Calu3 (cell line): ENCODE measurements at regions of chr12 and their contacts with region 1.

Region 1: GRCh38 chr12:76455582-76456345 is 103.8 kb downstream of the OSBPL8 start:
- DNase-seq: peak; percentile 55
- H3K4me3 Mint-ChIP-seq: no peak overlapping the region
- H3K27ac Mint-ChIP-seq: peak overlapping the region; percentile 67
- H3K4me1 Mint-ChIP-seq: peaks cover 27% of the 10 kb centered on the region
- H3K27me3 Mint-ChIP-seq: no peaks in the 10 kb centered on the region
- CTCF ChIP-seq: peak; percentile 44

Region 2: GRCh38 chr12:75908961-75909605 is 546.7 kb before region 1 on chr12:
- CTCF ChIA-PET with region 1: no interaction called
- intact Hi-C with region 1: no loop called
- DNase-seq: no peak
- H3K4me3 Mint-ChIP-seq: no peak overlapping the region
- H3K27ac Mint-ChIP-seq: no peak overlapping the region
- H3K4me1 Mint-ChIP-seq: peaks cover 38% of the 10 kb centered on the region
- H3K27me3 Mint-ChIP-seq: no peaks in the 10 kb centered on the region
- CTCF ChIP-seq: no peak

Region 3: GRCh38 chr12:76037130-76038103 is 418.3 kb before region 1 on chr12:
- CTCF ChIA-PET with region 1: no interaction called
- intact Hi-C with region 1: loop called (anchors 5 kb)
- DNase-seq: peak; percentile 52
- H3K4me3 Mint-ChIP-seq: peak overlapping the region; percentile 0
- H3K27ac Mint-ChIP-seq: peak overlapping the region; percentile 31
- H3K4me1 Mint-ChIP-seq: peaks cover 57% of the 10 kb centered on the region
- H3K27me3 Mint-ChIP-seq: no peaks in the 10 kb centered on the region
- CTCF ChIP-seq: peak; percentile 71

Region 4: DNA sequence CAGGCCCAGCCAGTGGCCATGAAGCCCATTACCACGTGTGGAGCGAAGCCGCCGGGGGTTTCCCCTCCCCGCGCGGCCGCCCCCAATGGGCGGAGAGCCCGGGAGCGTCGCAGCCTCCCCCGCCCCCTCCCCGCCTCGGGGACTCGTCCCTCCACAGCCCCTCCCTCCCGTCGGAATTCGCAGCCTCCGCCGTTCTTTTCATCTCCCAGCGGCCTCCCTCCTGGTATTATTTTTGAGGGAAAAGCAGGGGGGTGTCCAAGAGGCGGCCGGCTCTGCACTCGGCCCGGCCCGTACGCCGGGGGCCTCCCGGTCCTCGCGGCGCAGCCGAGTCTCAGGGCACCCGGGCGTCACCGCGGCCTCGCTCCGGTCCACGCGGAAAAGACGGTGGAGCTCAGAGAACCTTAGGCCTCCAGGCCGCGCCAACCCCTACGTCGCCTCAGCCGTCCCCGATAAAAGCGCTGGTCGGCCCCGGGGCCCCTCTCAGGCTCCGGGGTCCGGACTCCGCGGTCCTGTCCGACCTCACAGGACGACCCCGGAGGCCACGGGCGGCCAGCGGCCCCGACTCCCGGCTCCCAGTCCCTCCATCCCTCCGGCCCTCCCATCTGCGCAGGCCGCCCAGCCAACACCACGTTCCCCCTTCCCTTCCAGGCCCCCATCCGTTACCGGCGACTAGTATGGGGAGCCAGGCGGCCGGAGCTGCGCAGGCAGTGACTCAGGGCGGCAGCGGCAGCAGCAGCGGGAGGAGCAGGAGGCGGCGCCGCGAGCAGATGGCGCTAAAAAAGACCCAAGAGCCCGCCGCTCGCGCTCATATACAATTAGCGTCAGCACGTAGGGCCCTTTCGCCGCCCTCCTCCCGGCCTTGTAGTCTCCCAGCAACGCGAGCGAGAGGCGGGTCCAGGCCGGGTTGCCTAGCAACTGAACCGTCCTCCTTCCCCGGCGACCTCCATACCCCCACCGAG is 371.6 kb before region 1 on chr12 and contains the start of gene NAP1L1:
- CTCF ChIA-PET with region 1: interaction called, 7 read pairs
- intact Hi-C with region 1: loop called (anchors 5 kb)
- DNase-seq: peak; percentile 98
- H3K4me3 Mint-ChIP-seq: peak within 1 kb of the TSS; percentile 99
- H3K27ac Mint-ChIP-seq: peak within 1 kb of the TSS; percentile 97
- H3K4me1 Mint-ChIP-seq: peaks cover 31% of the 10 kb centered on the region
- H3K27me3 Mint-ChIP-seq: no peaks in the 10 kb centered on the region
- CTCF ChIP-seq: no peak
- total RNA-seq, gene NAP1L1: 394 and 467 TPM in 2 replicates

Region 5: GRCh38 chr12:76374386-76375020 is 81.3 kb before region 1 on chr12:
- CTCF ChIA-PET with region 1: interaction called, 3 read pairs
- intact Hi-C with region 1: loop called (anchors 5 kb)
- DNase-seq: peak; percentile 9
- H3K4me3 Mint-ChIP-seq: no peak overlapping the region
- H3K27ac Mint-ChIP-seq: peak overlapping the region; percentile 64
- H3K4me1 Mint-ChIP-seq: peaks cover 25% of the 10 kb centered on the region
- H3K27me3 Mint-ChIP-seq: no peaks in the 10 kb centered on the region
- CTCF ChIP-seq: no peak

Region 6: DNA sequence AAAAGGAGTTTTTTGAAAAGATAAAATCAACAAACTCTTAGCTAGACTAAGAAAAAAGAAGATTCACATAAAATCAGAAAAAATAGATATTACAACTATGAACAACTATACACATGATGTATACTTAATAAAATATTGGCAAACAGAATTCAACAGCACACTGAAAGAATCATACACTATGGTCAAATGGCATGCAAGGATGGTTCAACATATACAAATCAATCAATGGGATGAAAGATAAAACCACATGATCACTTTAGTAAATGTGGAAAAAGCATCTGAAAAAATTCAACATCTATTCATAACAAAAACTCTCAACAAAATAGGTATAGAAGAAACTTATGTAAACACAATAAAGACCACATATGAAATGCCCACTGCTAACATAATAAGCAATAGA is 23.0 kb before region 1 on chr12:
- CTCF ChIA-PET with region 1: no interaction called
- intact Hi-C with region 1: no loop called
- DNase-seq: no peak
- H3K4me3 Mint-ChIP-seq: no peak overlapping the region
- H3K27ac Mint-ChIP-seq: no peak overlapping the region
- H3K4me1 Mint-ChIP-seq: no peaks in the 10 kb centered on the region
- H3K27me3 Mint-ChIP-seq: no peaks in the 10 kb centered on the region
- CTCF ChIP-seq: no peak

Region 7: DNA sequence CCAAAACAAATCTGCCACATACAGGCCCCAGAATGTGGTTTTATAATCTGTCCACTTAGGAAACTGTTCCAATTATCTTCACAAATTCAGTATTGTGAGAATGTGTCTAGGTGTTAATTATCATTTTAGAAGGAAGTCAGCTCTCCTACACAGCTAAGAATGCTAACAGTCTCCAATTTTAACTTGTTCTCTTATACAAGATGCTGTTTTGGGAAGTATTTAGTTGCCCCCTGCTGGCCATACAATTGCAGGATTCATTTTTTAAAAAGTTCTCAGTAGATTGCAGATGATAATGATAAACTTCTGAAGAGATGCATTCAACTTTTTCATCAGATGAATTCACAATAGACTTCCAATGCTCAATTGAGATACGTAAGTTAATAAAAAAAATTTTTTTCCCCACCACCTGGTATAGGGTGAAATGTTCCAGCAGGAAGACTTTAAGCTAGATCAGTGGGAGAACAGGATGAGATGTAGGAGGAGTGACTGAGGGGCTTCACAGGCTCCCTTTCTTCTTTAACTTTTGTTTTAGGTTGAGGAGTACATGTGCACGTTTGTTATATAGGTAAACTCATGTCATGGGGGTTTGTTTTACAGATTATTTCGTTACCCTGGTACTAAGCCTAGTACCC is 131.1 kb after region 1 on chr12:
- CTCF ChIA-PET with region 1: interaction called, 10 read pairs
- intact Hi-C with region 1: loop called (anchors 5 kb)
- DNase-seq: peak; percentile 41
- H3K4me3 Mint-ChIP-seq: no peak overlapping the region
- H3K27ac Mint-ChIP-seq: no peak overlapping the region
- H3K4me1 Mint-ChIP-seq: peaks cover 8% of the 10 kb centered on the region
- H3K27me3 Mint-ChIP-seq: no peaks in the 10 kb centered on the region
- CTCF ChIP-seq: peak; percentile 40